Transverse colon (tissue), 4 donors: ENCODE measurements at regions of chr17 and their contacts with region 1.

Region 1: DNA sequence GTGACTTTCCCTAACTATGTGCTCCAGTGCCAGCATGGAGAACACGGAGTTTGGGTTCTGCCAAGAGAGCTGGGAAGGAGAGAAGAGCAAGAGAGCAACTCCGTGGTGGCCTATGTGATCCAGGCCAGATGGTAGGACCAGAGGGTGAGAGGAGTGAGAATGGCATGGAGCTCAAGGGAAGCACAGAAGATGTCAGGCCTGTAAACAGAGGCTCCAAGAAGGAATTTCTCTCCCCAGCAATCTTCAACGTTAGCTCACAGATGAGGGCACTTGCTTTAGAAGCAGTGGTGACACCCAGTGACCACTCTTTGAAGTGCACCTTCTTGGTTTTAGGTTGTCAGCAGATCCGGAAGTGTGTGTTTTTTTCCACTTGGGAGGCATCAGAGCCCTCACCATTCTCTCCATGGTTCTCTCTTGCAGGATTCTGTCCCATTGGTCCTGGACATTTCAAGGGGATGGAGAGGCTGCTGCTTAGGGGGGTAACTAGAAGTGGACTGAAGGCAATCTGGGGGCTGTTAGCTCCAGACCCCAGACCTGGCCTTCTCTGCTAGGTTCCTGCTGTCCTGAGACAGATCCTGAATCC is 18.1 kb upstream of the TMEM98 start:
- DNase-seq: peak; percentile 91
- H3K4me3 ChIP-seq: no peak overlapping the region
- H3K27ac ChIP-seq: peak overlapping the region; percentile 69 to 83 (median 77)
- H3K4me1 ChIP-seq: peaks cover 15 to 49% (median 31%) of the 10 kb centered on the region in 4 donors
- H3K27me3 ChIP-seq: no peaks in the 10 kb centered on the region
- CTCF ChIP-seq: peak; percentile 71 to 90 (median 79)
- EP300 ChIP-seq: no peak
- POLR2A ChIP-seq: no peak

Region 2: GRCh38 chr17:32396343-32396742 is 513.5 kb before region 1 on chr17:
- in situ Hi-C with region 1: no loop called
- intact Hi-C with region 1: no loop called
- DNase-seq: peak; percentile 15
- H3K4me3 ChIP-seq: no peak overlapping the region
- H3K27ac ChIP-seq: no peak overlapping the region
- H3K4me1 ChIP-seq: no peaks in the 10 kb centered on the region
- H3K27me3 ChIP-seq: no peaks in the 10 kb centered on the region
- CTCF ChIP-seq: no peak
- EP300 ChIP-seq: no peak
- POLR2A ChIP-seq: no peak

Region 3: GRCh38 chr17:32486111-32486700 is 423.7 kb before region 1 on chr17:
- in situ Hi-C with region 1: loop called in 1 of 4 experiments (anchors 25 kb)
- intact Hi-C with region 1: no loop called
- DNase-seq: peak; percentile 73
- H3K4me3 ChIP-seq: peak overlapping the region in 3 of 4 donors; percentile 58 to 59 (median 58)
- H3K27ac ChIP-seq: peak overlapping the region; percentile 50 to 67 (median 64)
- H3K4me1 ChIP-seq: peaks cover 0 to 24% (median 11%) of the 10 kb centered on the region in 4 donors
- H3K27me3 ChIP-seq: no peaks in the 10 kb centered on the region
- CTCF ChIP-seq: no peak
- EP300 ChIP-seq: no peak
- POLR2A ChIP-seq: no peak

Region 4: GRCh38 chr17:32659419-32659842 is 250.4 kb before region 1 on chr17:
- in situ Hi-C with region 1: loop called in 2 of 4 experiments (anchors 25 kb)
- intact Hi-C with region 1: no loop called
- DNase-seq: peak; percentile 73
- H3K4me3 ChIP-seq: no peak overlapping the region
- H3K27ac ChIP-seq: no peak overlapping the region
- H3K4me1 ChIP-seq: no peaks in the 10 kb centered on the region
- H3K27me3 ChIP-seq: no peaks in the 10 kb centered on the region
- CTCF ChIP-seq: peak; percentile 83 to 92 (median 90)
- EP300 ChIP-seq: no peak
- POLR2A ChIP-seq: no peak

Region 5: GRCh38 chr17:33055171-33055611 is 145.3 kb after region 1 on chr17:
- in situ Hi-C with region 1: no loop called
- intact Hi-C with region 1: no loop called
- DNase-seq: no peak
- H3K4me3 ChIP-seq: no peak overlapping the region
- H3K27ac ChIP-seq: no peak overlapping the region
- H3K4me1 ChIP-seq: no peaks in the 10 kb centered on the region
- H3K27me3 ChIP-seq: peaks cover 10% of the 10 kb centered on the region
- CTCF ChIP-seq: no peak
- EP300 ChIP-seq: no peak
- POLR2A ChIP-seq: no peak